Activated CD4-positive, alpha-beta memory T cell treated with anti-CD3 and anti-CD28 coated beads for 36 hours (primary cell): ENCODE measurements at regions of chr1 and their contacts with region 1.

Region 1: DNA sequence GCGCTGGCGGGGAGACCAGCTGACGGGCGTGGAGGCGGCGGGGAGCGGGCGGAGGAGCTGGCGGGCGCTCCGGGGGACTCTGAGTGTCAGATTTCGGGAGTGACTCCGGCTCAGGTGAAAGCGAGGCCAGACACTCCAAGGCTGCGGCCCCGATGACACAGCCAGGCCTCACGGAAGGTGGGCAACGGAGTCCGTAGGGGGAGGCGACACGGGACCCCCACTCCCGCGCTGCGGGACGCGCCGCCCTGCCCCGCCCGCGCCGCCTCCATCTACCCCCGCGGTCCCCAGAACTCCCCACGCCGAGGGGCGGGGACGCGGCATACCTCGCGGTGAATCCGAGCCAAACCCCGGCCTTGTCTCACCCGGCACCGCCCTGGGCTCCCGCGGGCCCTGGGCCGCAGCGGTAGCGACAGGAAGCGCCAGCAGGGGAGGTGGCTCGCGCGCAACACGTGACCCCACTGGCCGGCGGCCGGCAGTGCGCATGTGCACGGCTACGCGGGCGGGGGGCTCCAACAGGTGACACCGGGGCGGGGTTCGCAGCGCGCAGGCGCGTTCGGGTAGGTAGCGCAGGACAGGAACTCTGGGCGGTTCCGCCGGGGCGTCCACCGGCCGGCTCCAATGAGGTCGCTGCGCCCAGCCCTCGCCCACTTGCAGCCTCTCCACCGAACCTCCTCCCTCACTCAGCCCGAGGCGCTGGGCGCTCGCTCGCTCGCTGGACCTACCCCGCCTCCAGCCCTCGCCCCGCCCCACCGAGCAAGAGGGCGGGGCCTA is at the start of gene CC2D1B:
- DNase-seq: peak; percentile 100
- H3K4me3 Mint-ChIP-seq: peak within 1 kb of the TSS; percentile 84
- H3K27ac Mint-ChIP-seq: peak within 1 kb of the TSS; percentile 89
- H3K4me1 Mint-ChIP-seq: peaks cover 47% of the 10 kb centered on the region
- H3K27me3 Mint-ChIP-seq: no peaks in the 10 kb centered on the region
- total RNA-seq, gene CC2D1B: 27.1 to 33.1 TPM

Region 2: DNA sequence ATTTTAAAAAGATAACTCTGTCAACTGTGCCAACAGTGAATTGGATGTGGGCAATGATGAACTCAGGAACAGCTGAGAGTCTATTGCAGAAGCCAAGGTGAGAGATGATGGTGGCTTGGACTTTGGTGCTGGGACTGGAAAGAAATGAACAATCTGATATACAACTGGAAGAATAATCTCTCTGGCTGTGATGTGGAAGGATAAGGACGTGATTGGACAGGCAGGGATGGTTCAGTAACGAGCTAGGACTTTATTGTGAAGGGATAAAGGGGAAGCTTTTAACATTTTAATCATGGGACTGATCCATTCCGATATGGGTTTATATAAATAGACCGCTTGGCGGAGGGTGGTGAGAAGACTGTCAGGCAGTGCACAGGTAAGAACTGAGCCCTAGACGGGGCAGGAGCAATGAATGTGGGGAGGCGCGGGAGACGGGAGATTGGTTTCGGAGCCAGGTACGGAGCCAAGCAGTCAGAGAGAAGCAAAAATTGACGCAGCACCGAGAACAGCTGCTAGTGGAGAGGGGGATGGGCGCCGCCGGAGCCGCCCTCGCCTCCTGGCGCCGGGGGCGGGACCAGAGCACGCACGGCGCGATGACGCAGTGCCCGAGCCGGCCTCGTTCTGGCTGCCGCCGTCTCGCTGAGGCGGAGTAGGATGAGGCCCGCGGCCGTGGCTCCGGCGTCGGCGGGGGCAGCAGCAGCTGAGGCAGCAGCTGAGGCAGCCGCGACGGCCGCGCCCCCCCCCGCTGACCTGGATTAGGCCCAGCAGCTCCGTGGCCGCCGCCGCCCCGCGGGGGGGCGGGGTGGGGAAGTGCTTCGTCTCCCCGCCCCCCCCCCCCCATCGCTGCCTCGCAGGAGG is 1130.0 kb before region 1 on chr1 and contains the start of gene RNF11:
- CTCF ChIA-PET with region 1: no interaction called
- POLR2A ChIA-PET with region 1: no interaction called
- intact Hi-C with region 1: loop called (anchors 5 kb)
- DNase-seq: peak; percentile 94
- H3K4me3 Mint-ChIP-seq: peak within 1 kb of the TSS; percentile 89
- H3K27ac Mint-ChIP-seq: peak within 1 kb of the TSS; percentile 81
- H3K4me1 Mint-ChIP-seq: peaks cover 38% of the 10 kb centered on the region
- H3K27me3 Mint-ChIP-seq: no peaks in the 10 kb centered on the region
- total RNA-seq, gene RNF11: 26.3 to 31.9 TPM

Region 3: GRCh38 chr1:52127181-52128180 is 238.4 kb before region 1 on chr1:
- CTCF ChIA-PET with region 1: interaction called, 5 read pairs
- POLR2A ChIA-PET with region 1: no interaction called
- intact Hi-C with region 1: loop called (anchors 5 kb)
- DNase-seq: peak; percentile 20
- H3K4me3 Mint-ChIP-seq: no peak overlapping the region
- H3K27ac Mint-ChIP-seq: no peak overlapping the region
- H3K4me1 Mint-ChIP-seq: peaks cover 4% of the 10 kb centered on the region
- H3K27me3 Mint-ChIP-seq: peaks cover 7% of the 10 kb centered on the region

Region 4: DNA sequence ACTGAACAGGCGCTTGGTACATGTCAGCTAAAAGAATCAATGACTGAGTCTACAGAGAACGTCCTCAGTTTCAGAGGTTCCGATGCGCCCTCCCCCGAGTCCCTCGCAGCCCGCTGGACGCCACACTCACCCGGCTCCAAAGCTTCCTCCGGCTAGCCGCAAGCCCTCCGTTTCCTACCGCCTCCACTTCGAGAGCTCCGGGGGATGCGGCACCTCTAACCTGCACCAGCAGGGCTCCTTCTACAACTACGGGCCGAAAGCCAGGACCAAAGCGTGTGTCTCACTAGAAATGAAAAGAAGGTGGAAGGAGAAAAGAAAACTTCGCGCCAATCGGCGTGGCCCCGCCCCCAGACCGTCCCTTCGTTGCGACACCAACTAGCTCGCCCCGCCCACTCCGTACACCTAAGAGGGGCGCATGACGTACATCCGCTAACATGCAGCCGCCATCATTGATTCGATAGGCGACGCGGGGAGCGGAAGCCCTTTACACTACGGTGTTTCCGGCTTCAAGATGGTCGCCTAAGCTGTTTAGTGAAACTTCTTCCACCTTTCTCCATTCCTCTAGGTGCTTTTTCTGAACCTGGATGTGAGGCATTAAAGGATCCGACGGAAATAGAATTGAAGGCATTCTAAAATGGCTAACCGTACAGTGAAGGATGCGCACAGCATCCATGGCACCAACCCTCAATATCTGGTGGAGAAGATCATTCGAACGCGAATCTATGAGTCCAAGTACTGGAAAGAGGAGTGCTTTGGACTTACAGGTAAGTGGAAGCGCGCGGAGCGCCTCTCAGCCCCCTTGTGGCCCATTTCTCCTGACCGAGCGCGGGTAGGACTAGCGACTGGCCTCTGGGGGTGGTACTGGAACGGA is 38.4 kb after region 1 on chr1 and contains the starts of genes ORC1 and PRPF38A:
- CTCF ChIA-PET with region 1: interaction called, 4 read pairs
- POLR2A ChIA-PET with region 1: interaction called, 21 read pairs
- intact Hi-C with region 1: loop called (anchors 1 kb)
- DNase-seq: peak; percentile 99
- H3K4me3 Mint-ChIP-seq: peak within 1 kb of the TSS; percentile 100
- H3K27ac Mint-ChIP-seq: peak within 1 kb of the TSS; percentile 96
- H3K4me1 Mint-ChIP-seq: peaks cover 39% of the 10 kb centered on the region
- H3K27me3 Mint-ChIP-seq: no peaks in the 10 kb centered on the region
- total RNA-seq, gene ORC1: 42.5 to 43.0 TPM
- total RNA-seq, gene PRPF38A: 74.6 to 79.7 TPM

Region 5: GRCh38 chr1:52511851-52512615 is 146.1 kb after region 1 on chr1:
- CTCF ChIA-PET with region 1: no interaction called
- POLR2A ChIA-PET with region 1: no interaction called
- intact Hi-C with region 1: no loop called
- DNase-seq: no peak
- H3K4me3 Mint-ChIP-seq: no peak overlapping the region
- H3K27ac Mint-ChIP-seq: no peak overlapping the region
- H3K4me1 Mint-ChIP-seq: peaks cover 19% of the 10 kb centered on the region
- H3K27me3 Mint-ChIP-seq: no peaks in the 10 kb centered on the region

Region 6: GRCh38 chr1:52636721-52637695 is 271.1 kb after region 1 on chr1:
- CTCF ChIA-PET with region 1: no interaction called
- POLR2A ChIA-PET with region 1: interaction called, 4 read pairs
- intact Hi-C with region 1: loop called (anchors 2 kb)
- DNase-seq: peak; percentile 86
- H3K4me3 Mint-ChIP-seq: peak overlapping the region; percentile 65
- H3K27ac Mint-ChIP-seq: peak overlapping the region; percentile 98
- H3K4me1 Mint-ChIP-seq: peaks cover 75% of the 10 kb centered on the region
- H3K27me3 Mint-ChIP-seq: no peaks in the 10 kb centered on the region

Region 7: GRCh38 chr1:52702886-52703787 is 337.2 kb after region 1 on chr1:
- CTCF ChIA-PET with region 1: interaction called, 3 read pairs
- POLR2A ChIA-PET with region 1: interaction called, 3 read pairs
- intact Hi-C with region 1: loop called (anchors 1 kb)
- DNase-seq: peak; percentile 91
- H3K4me3 Mint-ChIP-seq: peak overlapping the region; percentile 90
- H3K27ac Mint-ChIP-seq: peak overlapping the region; percentile 94
- H3K4me1 Mint-ChIP-seq: peaks cover 22% of the 10 kb centered on the region
- H3K27me3 Mint-ChIP-seq: no peaks in the 10 kb centered on the region

Region 8: DNA sequence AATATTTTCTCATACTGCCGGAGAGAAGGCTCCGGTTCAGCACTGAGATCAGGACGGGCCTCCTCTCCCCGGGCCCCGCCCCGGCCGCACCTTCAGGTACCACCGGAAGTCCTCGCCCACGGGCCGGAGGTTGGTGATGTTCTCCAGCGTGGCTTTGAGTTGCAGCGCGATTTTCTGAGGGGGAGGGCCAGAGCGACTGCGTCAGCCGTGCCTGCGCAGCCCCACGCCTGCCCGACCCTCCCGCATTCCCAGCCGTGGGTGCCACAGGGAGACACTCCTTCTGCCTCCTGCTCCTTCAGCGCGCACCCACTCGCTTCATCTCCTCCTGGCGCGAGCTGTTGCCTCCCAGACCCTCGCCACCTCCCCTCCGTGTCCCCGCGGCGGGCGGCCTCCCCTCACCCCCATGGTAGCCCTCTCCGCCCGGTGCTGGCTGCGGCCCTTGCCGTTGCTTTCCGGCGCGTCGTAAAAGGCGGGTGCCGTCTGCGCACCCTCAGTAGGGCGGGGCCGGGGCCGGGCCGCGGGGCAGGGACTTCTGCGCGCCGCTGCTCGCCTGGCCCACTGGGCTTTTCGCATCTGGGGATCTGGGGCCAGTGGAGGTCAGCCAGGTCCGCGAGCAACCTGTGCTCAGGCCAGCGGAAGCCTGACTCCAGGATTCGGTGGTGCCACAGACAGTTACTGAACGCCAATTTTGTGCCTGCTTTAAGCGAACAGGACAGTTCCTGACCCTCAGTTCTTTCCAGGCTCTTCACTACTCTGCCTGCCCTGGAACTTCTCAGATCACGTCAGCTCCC is 854.4 kb after region 1 on chr1 and contains the start of gene CZIB:
- CTCF ChIA-PET with region 1: no interaction called
- POLR2A ChIA-PET with region 1: no interaction called
- intact Hi-C with region 1: loop called (anchors 1 kb)
- DNase-seq: peak; percentile 97
- H3K4me3 Mint-ChIP-seq: peak within 1 kb of the TSS; percentile 89
- H3K27ac Mint-ChIP-seq: peak within 1 kb of the TSS; percentile 95
- H3K4me1 Mint-ChIP-seq: peaks cover 21% of the 10 kb centered on the region
- H3K27me3 Mint-ChIP-seq: no peaks in the 10 kb centered on the region
- total RNA-seq, gene CZIB: 34.0 to 37.4 TPM